ENCODE measurements at regions of chr20 and their contacts with region 1.

Region 1: GRCh38 chr20:17682103-17682888 is at the start of gene RRBP1:
- DNase-seq: peak; percentile 97 to 98 (median 98)
- H3K4me3 ChIP-seq: peak within 1 kb of the TSS; percentile 79 to 81
- H3K4me3 Mint-ChIP-seq: peak within 1 kb of the TSS; percentile 81 to 94 (median 90)
- H3K27ac ChIP-seq: peak within 1 kb of the TSS; percentile 63
- H3K27ac Mint-ChIP-seq: peak within 1 kb of the TSS; percentile 71 to 96 (median 87)
- H3K4me1 ChIP-seq: peaks cover 22% of the 10 kb centered on the region
- H3K4me1 Mint-ChIP-seq: peaks cover 10 to 28% (median 20%) of the 10 kb centered on the region in 4 donors
- H3K27me3 ChIP-seq: peaks cover 3% of the 10 kb centered on the region
- H3K27me3 Mint-ChIP-seq: peaks cover 19 to 24% of the 10 kb centered on the region in 2 donors
- total RNA-seq, gene RRBP1: 28.0 to 33.7 TPM

Region 2: DNA sequence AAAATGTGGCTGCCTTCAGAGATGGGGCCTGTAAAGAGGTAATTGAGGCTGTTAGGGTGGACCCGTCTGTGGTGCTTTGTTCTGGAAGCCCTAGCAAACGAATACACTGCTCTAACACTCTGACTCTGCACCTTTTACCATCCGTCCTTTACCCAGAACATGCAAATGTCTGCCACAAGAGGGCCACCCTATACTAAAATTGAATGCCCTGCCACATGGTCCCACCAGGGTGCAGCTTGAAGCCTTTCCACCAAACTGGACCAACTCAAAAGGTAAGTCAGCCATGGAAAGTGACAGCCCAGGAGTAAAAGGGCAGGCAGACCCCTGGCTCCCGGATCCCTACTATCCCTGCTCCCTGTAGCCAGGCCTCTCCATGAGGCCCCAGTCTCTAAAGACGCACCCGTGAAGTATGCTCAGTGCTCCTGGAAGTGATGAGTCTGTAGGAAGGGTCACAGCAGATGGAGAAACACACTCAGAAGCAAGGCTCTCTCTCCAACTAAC is 145.3 kb before region 1 on chr20:
- CTCF ChIA-PET with region 1: interaction called, 7 read pairs
- POLR2A ChIA-PET with region 1: interaction called, 3 read pairs
- intact Hi-C with region 1: loop called (anchors 2 kb)
- DNase-seq: peak; percentile 64 to 76 (median 70)
- H3K4me3 ChIP-seq: no peak overlapping the region
- H3K4me3 Mint-ChIP-seq: no peak overlapping the region
- H3K27ac ChIP-seq: no peak overlapping the region
- H3K27ac Mint-ChIP-seq: no peak overlapping the region
- H3K4me1 ChIP-seq: peaks cover 8% of the 10 kb centered on the region
- H3K4me1 Mint-ChIP-seq: peaks cover 10 to 18% (median 15%) of the 10 kb centered on the region in 4 donors
- H3K27me3 ChIP-seq: no peaks in the 10 kb centered on the region
- H3K27me3 Mint-ChIP-seq: peaks cover 16 to 20% of the 10 kb centered on the region in 2 donors

Region 3: DNA sequence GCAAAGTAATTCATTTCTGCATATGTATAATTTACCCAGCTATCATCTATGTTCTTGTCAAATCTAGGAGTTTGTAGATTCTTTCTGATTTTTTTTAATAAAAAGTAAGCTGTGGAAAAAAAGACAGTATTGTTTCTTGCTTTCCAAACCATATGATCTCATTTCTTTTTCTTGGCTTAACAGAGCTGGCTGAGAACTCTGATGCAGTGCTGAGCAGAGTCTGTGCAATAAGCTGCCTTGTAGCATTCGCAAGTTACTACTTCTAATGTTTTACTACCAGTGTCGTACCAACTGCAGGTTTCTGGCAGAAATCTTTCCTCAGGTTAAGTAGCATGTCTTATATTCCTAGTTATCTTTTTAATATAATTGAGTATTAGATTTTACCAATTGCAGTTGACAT is 15.8 kb before region 1 on chr20:
- CTCF ChIA-PET with region 1: interaction called, 24 read pairs
- POLR2A ChIA-PET with region 1: interaction called, 4 read pairs
- intact Hi-C with region 1: no loop called
- DNase-seq: no peak
- H3K4me3 ChIP-seq: no peak overlapping the region
- H3K4me3 Mint-ChIP-seq: no peak overlapping the region
- H3K27ac ChIP-seq: no peak overlapping the region
- H3K27ac Mint-ChIP-seq: peak overlapping the region in 1 of 7 donors; percentile 15
- H3K4me1 ChIP-seq: peaks cover 28% of the 10 kb centered on the region
- H3K4me1 Mint-ChIP-seq: peaks cover 28 to 75% (median 42%) of the 10 kb centered on the region in 4 donors
- H3K27me3 ChIP-seq: no peaks in the 10 kb centered on the region
- H3K27me3 Mint-ChIP-seq: no peaks in the 10 kb centered on the region

Region 4: GRCh38 chr20:17958373-17959256 is 276.3 kb after region 1 on chr20:
- CTCF ChIA-PET with region 1: interaction called, 14 read pairs
- POLR2A ChIA-PET with region 1: interaction called, 4 read pairs
- intact Hi-C with region 1: no loop called
- DNase-seq: no peak
- H3K4me3 ChIP-seq: peak overlapping the region in 1 of 2 donors; percentile 4
- H3K4me3 Mint-ChIP-seq: peak overlapping the region in 6 of 8 donors; percentile 36 to 76 (median 66)
- H3K27ac ChIP-seq: peak overlapping the region; percentile 33
- H3K27ac Mint-ChIP-seq: peak overlapping the region; percentile 26 to 99 (median 82)
- H3K4me1 ChIP-seq: peaks cover 84% of the 10 kb centered on the region
- H3K4me1 Mint-ChIP-seq: peaks cover 54 to 83% (median 72%) of the 10 kb centered on the region in 4 donors
- H3K27me3 ChIP-seq: no peaks in the 10 kb centered on the region
- H3K27me3 Mint-ChIP-seq: no peaks in the 10 kb centered on the region

Region 5: GRCh38 chr20:18019070-18019469 is 336.8 kb after region 1 on chr20:
- CTCF ChIA-PET with region 1: interaction called, 4 read pairs
- POLR2A ChIA-PET with region 1: no interaction called
- intact Hi-C with region 1: loop called (anchors 1 kb)
- DNase-seq: peak in 1 of 5 donors; percentile 6
- H3K4me3 ChIP-seq: no peak overlapping the region
- H3K4me3 Mint-ChIP-seq: no peak overlapping the region
- H3K27ac ChIP-seq: no peak overlapping the region
- H3K27ac Mint-ChIP-seq: no peak overlapping the region
- H3K4me1 ChIP-seq: no peaks in the 10 kb centered on the region
- H3K4me1 Mint-ChIP-seq: no peaks in the 10 kb centered on the region
- H3K27me3 ChIP-seq: no peaks in the 10 kb centered on the region
- H3K27me3 Mint-ChIP-seq: no peaks in the 10 kb centered on the region

Region 6: DNA sequence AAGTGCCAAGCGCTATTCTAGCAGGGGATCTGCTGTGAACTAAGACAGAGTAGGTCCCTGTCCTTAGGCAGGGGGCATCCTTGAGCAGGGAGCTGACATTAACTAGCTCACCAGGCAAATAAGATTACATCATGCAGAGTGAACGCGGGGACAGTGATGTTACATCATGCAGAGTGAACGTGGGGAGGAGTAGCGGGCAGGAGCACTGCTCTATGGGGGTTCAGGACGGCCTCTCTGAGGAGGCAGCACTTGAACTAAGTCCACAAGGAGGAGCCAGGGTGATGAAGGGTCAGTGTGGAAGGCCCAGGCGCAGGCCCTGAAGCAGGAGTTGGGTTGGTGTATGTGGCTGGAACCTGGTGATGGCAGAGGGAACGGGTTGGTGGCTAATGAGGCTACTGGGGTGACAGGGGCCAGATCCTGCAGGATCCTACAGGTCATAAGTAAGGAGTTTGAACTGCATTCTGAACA is 494.1 kb after region 1 on chr20:
- CTCF ChIA-PET with region 1: no interaction called
- POLR2A ChIA-PET with region 1: no interaction called
- intact Hi-C with region 1: no loop called
- DNase-seq: no peak
- H3K4me3 ChIP-seq: no peak overlapping the region
- H3K4me3 Mint-ChIP-seq: peak overlapping the region in 1 of 8 donors; percentile 57
- H3K27ac ChIP-seq: no peak overlapping the region
- H3K27ac Mint-ChIP-seq: peak overlapping the region in 1 of 7 donors; percentile 55
- H3K4me1 ChIP-seq: no peaks in the 10 kb centered on the region
- H3K4me1 Mint-ChIP-seq: peaks cover 6 to 18% (median 15%) of the 10 kb centered on the region in 4 donors
- H3K27me3 ChIP-seq: no peaks in the 10 kb centered on the region
- H3K27me3 Mint-ChIP-seq: peaks cover 0 to 1% of the 10 kb centered on the region in 2 donors

Region 7: DNA sequence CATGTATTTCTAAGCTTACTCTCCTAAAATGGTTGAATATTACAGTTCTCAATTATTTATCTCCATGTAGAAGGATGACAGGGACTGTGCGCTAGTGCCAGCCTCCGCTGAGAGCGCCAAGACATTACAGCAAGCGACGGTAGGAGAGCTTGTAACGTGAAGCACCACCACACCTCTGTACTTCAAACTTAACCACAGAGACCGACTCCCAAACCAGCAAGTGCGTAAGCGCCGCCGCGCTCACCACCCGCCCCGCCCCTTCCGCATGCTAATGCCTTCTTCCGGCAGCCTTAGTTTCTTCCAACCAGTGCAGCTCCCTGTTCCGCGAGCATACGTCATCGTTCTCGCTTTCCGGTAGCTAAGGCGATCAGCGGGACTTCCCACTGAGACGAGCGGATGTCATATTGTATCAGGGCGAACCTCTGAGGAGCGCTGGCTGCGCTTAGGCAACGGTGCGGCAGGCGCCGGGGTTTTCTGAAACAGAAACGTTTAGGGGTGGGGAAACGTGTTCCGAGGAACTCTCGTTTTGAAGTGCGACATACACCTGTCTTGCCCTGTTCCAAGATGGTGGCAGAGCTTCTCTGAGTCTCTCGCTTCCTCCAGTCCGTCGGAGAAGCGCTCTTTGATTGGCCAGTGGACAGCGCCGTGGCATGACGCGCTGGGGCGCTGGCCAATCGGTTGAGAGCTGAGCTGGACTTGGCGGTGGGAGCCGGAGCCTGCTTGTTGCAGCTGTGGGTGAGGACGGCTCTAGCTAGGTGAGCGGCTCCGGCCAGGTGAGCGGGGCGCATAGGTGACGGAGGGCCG is 825.1 kb after region 1 on chr20 and contains the start of gene SEC23B:
- CTCF ChIA-PET with region 1: no interaction called
- POLR2A ChIA-PET with region 1: interaction called, 8 read pairs
- intact Hi-C with region 1: loop called (anchors 2 kb)
- DNase-seq: peak; percentile 99 to 100 (median 99)
- H3K4me3 ChIP-seq: peak within 1 kb of the TSS; percentile 78 to 82
- H3K4me3 Mint-ChIP-seq: peak within 1 kb of the TSS; percentile 99 to 100 (median 100)
- H3K27ac ChIP-seq: peak within 1 kb of the TSS; percentile 87
- H3K27ac Mint-ChIP-seq: peak within 1 kb of the TSS; percentile 95 to 100 (median 100)
- H3K4me1 ChIP-seq: peaks cover 22% of the 10 kb centered on the region
- H3K4me1 Mint-ChIP-seq: peaks cover 24 to 48% (median 39%) of the 10 kb centered on the region in 4 donors
- H3K27me3 ChIP-seq: no peaks in the 10 kb centered on the region
- H3K27me3 Mint-ChIP-seq: peaks cover 0 to under 1% of the 10 kb centered on the region in 2 donors
- total RNA-seq, gene SEC23B: 46.8 to 50.0 TPM

Measured in CD4-positive, alpha-beta memory T cell (primary cell).